ENCODE measurements at regions of chr1 and their contacts with region 1.

Region 1: GRCh38 chr1:201828820-201829774 is at the start of gene IPO9:
- DNase-seq: peak; percentile 85
- H3K4me3 ChIP-seq: peak within 1 kb of the TSS; percentile 100
- H3K27ac ChIP-seq: peak within 1 kb of the TSS; percentile 94
- H3K27me3 ChIP-seq: no peaks in the 10 kb centered on the region
- CTCF ChIP-seq: peak; percentile 90
- polyA plus RNA-seq, gene IPO9: 55.5 and 57.9 TPM in 2 replicates

Region 2: DNA sequence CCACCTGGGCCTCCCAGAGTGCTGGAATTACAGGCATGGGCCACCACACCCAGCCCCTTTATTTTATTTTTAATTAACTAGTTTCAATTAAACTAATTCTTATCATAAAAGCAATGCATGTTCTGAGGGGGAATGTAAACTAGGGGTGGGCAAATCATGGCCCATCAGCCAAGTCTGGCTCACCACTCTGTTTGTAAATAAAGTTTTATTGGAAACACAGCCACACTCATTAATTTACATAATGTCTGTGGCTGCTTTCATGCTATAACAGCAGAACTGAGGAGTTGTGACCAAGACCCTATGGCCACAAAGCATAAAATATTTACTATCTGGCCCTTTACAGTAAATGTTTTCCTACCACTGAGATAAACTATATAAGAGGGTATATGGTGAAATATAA is 28.9 kb before region 1 on chr1:
- CTCF ChIA-PET with region 1: interaction called, 7 read pairs
- POLR2A ChIA-PET with region 1: interaction called, 15 read pairs
- DNase-seq: no peak
- H3K4me3 ChIP-seq: no peak overlapping the region
- H3K27ac ChIP-seq: no peak overlapping the region
- H3K27me3 ChIP-seq: no peaks in the 10 kb centered on the region
- CTCF ChIP-seq: no peak

Region 3: GRCh38 chr1:201946224-201946908 is 117.3 kb after region 1 on chr1 and contains the start of gene LMOD1:
- CTCF ChIA-PET with region 1: no interaction called
- POLR2A ChIA-PET with region 1: no interaction called
- DNase-seq: peak; percentile 95
- H3K4me3 ChIP-seq: peak within 1 kb of the TSS; percentile 98
- H3K27ac ChIP-seq: peak within 1 kb of the TSS; percentile 99
- H3K27me3 ChIP-seq: no peaks in the 10 kb centered on the region
- CTCF ChIP-seq: peak; percentile 26; the same call in 1 of the 2 replicates
- polyA plus RNA-seq, gene LMOD1: 41.1 and 52.6 TPM in 2 replicates

Measured in AG04450 (cell line).